ENCODE measurements at regions of chr11 and their contacts with region 1.

Region 1: DNA sequence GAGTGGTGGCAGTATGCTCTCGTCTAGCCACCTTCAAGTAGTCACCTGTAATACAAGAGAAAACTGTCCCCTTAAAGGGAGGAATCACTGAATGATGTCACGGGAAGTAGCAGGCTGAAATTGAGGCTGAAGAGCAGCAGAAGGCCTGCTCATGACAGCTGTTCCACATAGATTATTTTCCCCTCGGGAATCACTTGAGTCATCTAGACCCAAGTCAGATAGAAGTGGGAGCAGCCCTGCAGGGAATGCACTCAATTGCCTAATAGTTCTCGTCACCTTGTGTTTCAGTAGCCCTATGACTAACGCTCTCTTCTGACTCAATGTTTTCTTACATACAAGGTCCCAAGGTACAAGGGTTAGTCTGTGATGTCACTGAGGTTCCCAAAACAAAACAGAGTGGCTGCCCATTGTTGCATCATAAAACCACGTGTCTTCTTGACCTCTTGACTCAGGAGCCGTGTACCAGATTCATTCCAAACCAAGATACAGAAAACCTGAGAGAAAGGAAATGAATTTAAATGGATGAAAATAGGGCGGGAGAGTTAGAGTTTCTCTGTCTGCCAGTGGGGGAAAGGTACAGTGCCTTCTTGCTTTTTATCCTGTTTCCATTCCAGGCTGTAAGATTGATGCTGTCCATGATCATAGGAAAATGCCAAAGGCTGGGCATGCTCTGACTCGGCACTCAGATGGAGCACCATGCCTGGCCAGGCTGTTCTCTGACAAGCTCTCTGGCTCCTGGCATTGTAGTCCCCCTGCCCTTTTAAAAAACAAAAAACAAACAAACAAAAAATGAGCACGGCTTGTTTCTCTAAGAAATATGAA is 21.6 kb upstream of the C11orf96 start:
- DNase-seq: no peak
- H3K4me3 Mint-ChIP-seq: no peak overlapping the region
- H3K27ac Mint-ChIP-seq: peak overlapping the region; percentile 74
- H3K4me1 Mint-ChIP-seq: peaks cover 19% of the 10 kb centered on the region
- H3K27me3 Mint-ChIP-seq: no peaks in the 10 kb centered on the region

Region 2: DNA sequence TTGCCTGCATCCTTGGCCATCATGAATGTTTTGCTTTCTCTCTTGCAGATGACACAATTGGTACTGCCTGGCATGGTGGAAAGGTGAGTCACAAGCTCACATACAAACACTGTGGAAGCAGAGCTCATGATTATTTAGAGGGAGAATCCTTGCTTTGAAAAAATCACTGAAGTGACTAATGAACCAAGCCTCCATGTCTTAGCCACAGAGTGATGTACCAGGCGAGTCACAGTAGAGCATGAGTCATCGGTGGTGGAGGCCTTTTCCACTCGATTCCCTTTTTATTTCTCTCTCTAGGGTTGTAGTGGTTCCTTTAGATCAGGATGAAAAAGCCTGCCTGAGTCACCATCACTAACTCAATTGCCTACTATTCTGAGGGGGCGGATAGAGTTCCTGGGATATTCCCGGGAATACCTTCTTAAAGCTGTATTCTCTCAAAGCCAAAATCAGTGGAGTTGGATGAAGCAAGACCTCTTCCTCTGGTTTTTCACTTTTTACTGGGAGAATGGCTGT is 89.8 kb before region 1 on chr11:
- intact Hi-C with region 1: loop called (anchors 1 kb)
- DNase-seq: peak; percentile 2
- H3K4me3 Mint-ChIP-seq: no peak overlapping the region
- H3K27ac Mint-ChIP-seq: peak overlapping the region; percentile 80
- H3K4me1 Mint-ChIP-seq: peaks cover 18% of the 10 kb centered on the region
- H3K27me3 Mint-ChIP-seq: no peaks in the 10 kb centered on the region

Measured in activated T-helper 1 cell treated with anti-CD3 and anti-CD28 coated beads, Interleukin-12 subunit alpha, Interleukin-12 subunit beta, Interleukin-2, Interleukin-4 antibody, amounts not matched to agents 30 ng/mL and 10 ng/mL and 1 ng/mL, durations not matched to agents 14 hours and 24 hours and 36 hours (primary cell).